CD8-positive, alpha-beta T cell (primary cell): ENCODE measurements at regions of chr21 and their contacts with region 1.

Region 1: DNA sequence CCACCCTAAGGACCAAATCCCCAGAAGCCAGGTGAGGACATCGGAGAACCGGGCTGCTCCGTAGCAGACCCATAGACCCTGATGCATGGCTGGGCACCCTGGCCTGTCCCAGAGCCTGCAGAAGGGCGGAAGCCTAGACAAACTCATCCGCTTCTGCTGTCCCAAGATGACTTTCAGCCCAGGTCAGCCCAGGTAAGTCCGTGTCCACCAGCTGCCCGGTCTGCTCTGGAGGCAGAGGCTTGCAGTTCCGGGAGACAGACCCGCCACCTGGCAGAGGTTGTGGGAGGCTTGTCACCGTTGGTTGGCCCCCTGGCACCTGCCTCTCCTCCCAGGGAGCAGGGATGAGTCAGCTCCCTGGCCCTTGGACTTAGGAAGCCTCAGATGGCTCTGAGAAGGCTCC is 22.8 kb upstream of the POFUT2 start:
- DNase-seq: no peak
- ATAC-seq: no peak
- H3K4me3 ChIP-seq: no peak overlapping the region
- H3K4me3 Mint-ChIP-seq: no peak overlapping the region
- H3K27ac ChIP-seq: no peak overlapping the region
- H3K27ac Mint-ChIP-seq: no peak overlapping the region
- H3K4me1 ChIP-seq: peaks cover 7% of the 10 kb centered on the region
- H3K4me1 Mint-ChIP-seq: no peaks in the 10 kb centered on the region
- H3K27me3 ChIP-seq: peaks cover 0 to 3% of the 10 kb centered on the region in 2 experiments
- H3K27me3 Mint-ChIP-seq: peaks cover 17% of the 10 kb centered on the region
- CTCF ChIP-seq: no peak

Region 2: DNA sequence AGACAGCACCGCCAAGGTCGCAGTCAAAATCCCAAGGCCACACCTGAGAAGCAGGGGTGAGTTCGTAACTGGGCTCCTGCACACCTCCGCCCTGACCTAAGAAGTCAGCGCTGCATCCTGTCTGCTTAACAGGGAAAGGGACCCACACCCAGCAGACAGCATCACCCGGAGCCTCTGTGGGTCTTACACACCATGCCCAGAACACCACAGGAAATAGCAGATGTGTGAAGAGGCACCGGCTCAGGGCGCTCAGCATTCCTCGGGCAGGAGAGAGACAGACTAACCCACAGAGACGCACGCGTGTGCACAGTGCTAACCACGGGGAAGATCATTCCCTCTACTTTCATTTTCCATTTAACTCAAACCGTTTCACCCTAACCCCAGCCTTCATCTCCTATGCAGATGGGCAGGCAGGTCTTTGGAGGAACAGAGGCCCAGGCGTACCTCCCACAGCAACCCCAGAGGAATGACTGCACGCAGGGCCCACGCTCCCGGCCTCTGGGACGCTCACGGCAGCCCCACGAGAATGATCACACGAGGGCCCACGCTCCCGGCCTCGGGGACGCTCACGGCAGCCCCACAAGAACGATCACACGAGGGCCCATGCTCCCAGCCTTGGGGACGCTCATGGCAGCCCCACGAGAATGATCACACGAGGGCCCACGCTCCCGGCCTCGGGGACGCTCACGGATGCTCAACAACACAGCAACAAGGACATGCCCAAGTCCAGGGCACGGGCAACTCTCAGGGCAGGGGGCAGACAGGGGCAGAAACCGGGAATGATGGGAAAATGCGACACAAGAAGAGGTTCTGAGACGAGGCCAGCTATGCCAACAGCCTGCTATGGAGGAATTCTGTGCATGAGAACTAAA is 43.7 kb before region 1 on chr21:
- CTCF ChIA-PET with region 1: no interaction called
- POLR2A ChIA-PET with region 1: no interaction called
- intact Hi-C with region 1: no loop called
- DNase-seq: peak; percentile 31 to 92 (median 55)
- ATAC-seq: peak; percentile 91
- H3K4me3 ChIP-seq: peak overlapping the region in 1 of 2 experiments; percentile 12
- H3K4me3 Mint-ChIP-seq: peak overlapping the region; percentile 22
- H3K27ac ChIP-seq: peak overlapping the region; percentile 45 to 58
- H3K27ac Mint-ChIP-seq: peak overlapping the region; percentile 90
- H3K4me1 ChIP-seq: peaks cover 18% of the 10 kb centered on the region
- H3K4me1 Mint-ChIP-seq: peaks cover 16% of the 10 kb centered on the region
- H3K27me3 ChIP-seq: no peaks in the 10 kb centered on the region
- H3K27me3 Mint-ChIP-seq: no peaks in the 10 kb centered on the region
- CTCF ChIP-seq: no peak

Region 3: DNA sequence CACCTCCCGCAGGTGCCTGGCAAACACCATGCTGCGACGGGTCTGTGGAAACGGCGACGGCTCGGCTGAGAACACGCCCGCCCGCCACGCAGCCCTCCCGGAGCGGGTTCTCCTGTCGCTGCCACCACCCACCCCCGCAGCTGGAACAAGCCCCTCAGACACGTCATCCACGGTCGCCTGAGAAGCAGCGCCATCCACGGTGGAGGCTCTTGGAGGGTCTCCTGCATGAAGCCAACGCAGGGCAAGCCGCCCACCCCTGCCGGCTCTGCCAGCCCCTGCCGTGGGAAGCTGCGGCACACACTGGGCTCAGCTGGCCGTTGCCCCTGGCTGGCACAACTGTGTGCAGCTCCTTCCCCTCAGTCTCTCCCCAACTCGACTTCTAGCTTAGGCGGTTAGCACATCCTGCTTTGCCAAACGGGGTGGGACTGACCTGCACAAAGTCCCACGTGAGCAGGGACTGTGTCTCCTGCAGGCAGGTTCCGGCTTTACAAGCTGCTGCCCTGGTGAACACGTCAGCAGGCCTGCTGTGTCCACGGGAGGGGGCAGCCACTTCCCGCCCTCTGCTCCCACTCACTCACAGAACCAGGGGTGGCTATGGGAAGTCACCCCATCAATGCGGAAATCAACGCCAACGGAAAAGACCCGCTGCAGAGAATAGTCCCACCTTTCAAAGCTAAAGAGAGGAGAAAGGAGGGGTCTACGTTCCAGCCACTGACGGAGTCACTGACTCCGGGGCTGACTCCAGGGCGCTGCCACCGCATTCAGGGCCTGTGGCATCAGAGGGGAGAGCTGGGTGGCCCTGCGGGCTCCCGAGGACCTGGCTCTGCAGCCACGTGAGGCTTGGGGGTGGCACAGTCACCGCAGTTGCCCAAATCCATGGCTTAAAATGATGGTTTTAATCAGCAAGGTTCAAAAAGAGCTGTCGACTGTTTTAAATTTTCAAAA is 33.1 kb before region 1 on chr21:
- CTCF ChIA-PET with region 1: no interaction called
- POLR2A ChIA-PET with region 1: no interaction called
- intact Hi-C with region 1: loop called in 1 of 2 experiments (anchors 5 kb)
- DNase-seq: peak in 3 of 9 experiments; percentile 1 to 36 (median 5)
- ATAC-seq: no peak
- H3K4me3 ChIP-seq: no peak overlapping the region
- H3K4me3 Mint-ChIP-seq: no peak overlapping the region
- H3K27ac ChIP-seq: no peak overlapping the region
- H3K27ac Mint-ChIP-seq: no peak overlapping the region
- H3K4me1 ChIP-seq: no peaks in the 10 kb centered on the region
- H3K4me1 Mint-ChIP-seq: no peaks in the 10 kb centered on the region
- H3K27me3 ChIP-seq: no peaks in the 10 kb centered on the region
- H3K27me3 Mint-ChIP-seq: no peaks in the 10 kb centered on the region
- CTCF ChIP-seq: no peak

Region 4: GRCh38 chr21:45378258-45378966 is 68.0 kb after region 1 on chr21:
- CTCF ChIA-PET with region 1: no interaction called
- POLR2A ChIA-PET with region 1: no interaction called
- intact Hi-C with region 1: no loop called
- DNase-seq: no peak
- ATAC-seq: no peak
- H3K4me3 ChIP-seq: no peak overlapping the region
- H3K4me3 Mint-ChIP-seq: no peak overlapping the region
- H3K27ac ChIP-seq: no peak overlapping the region
- H3K27ac Mint-ChIP-seq: no peak overlapping the region
- H3K4me1 ChIP-seq: no peaks in the 10 kb centered on the region
- H3K4me1 Mint-ChIP-seq: no peaks in the 10 kb centered on the region
- H3K27me3 ChIP-seq: no peaks in the 10 kb centered on the region
- H3K27me3 Mint-ChIP-seq: peaks cover 17% of the 10 kb centered on the region
- CTCF ChIP-seq: no peak